WTC11 (cell line): ENCODE measurements at regions of chr6 and their contacts with region 1.

Region 1: DNA sequence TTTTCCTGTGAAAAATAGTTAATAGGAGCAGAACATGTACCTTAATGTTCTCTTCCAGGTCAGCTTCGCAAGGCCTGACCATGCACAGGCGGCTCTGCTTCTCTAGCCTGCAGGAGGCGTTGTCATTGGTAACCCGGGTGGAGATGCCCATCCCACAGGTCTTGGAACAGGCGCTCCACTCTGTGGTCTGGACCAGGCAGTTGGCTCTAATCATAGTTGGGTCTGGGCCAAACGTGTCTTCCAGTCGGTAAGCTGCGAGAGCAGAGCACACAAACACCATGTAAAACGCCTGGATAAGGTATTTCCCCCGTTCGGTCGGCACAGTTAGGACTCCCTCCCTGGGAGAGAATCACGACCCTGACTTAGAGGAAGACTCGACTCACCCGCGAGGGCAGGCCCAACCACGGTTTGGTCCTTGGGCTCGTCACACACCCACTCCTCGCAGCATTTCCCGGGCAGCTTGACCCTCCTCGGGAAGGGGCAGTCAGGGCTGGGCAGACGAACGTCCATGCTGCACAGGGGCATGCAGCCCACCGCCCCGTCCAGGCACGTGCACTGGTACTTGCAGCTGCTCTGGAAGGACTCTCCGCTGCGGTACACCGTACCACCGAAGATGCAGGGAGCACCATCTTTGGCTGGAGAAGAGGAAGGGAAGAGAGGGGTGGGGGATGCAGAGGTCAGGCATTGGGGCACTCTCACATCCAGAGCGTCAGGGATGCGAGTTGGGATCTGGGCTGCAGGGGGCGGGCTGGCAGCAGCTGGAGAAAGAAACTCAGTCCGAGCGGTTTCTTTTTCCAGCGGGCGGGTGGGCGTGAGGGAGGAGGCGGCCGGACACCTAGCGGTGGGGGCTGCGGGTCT is 1.0 kb downstream of the CCN2 start:
- DNase-seq: peak; percentile 85
- ATAC-seq: peak; percentile 43
- H3K4me3 Mint-ChIP-seq: peak overlapping the region; percentile 82
- H3K27ac Mint-ChIP-seq: peak overlapping the region; percentile 51; the same call in 1 of the 2 replicates
- H3K4me1 Mint-ChIP-seq: peaks cover 81% of the 10 kb centered on the region
- H3K27me3 Mint-ChIP-seq: no peaks in the 10 kb centered on the region
- CTCF ChIP-seq: peak; percentile 39; the same call in 1 of the 2 replicates

Region 2: GRCh38 chr6:131923356-131923755 is 26.8 kb before region 1 on chr6:
- CTCF ChIA-PET with region 1: interaction called, 20 read pairs
- POLR2A ChIA-PET with region 1: interaction called, 10 read pairs
- DNase-seq: peak; percentile 75
- ATAC-seq: peak; percentile 50
- H3K4me3 Mint-ChIP-seq: no peak overlapping the region
- H3K27ac Mint-ChIP-seq: no peak overlapping the region
- H3K4me1 Mint-ChIP-seq: no peaks in the 10 kb centered on the region
- H3K27me3 Mint-ChIP-seq: peaks cover 5% of the 10 kb centered on the region; the same call in 1 of the 2 replicates
- CTCF ChIP-seq: peak; percentile 84

Region 3: GRCh38 chr6:132025468-132025867 is 75.3 kb after region 1 on chr6:
- CTCF ChIA-PET with region 1: interaction called, 4 read pairs
- POLR2A ChIA-PET with region 1: interaction called, 12 read pairs
- DNase-seq: no peak
- ATAC-seq: peak; percentile 65
- H3K4me3 Mint-ChIP-seq: no peak overlapping the region
- H3K27ac Mint-ChIP-seq: peak overlapping the region; percentile 12; the same call in 1 of the 2 replicates
- H3K4me1 Mint-ChIP-seq: peaks cover 29% of the 10 kb centered on the region
- H3K27me3 Mint-ChIP-seq: no peaks in the 10 kb centered on the region
- CTCF ChIP-seq: no peak

Region 4: GRCh38 chr6:132259070-132259469 is 308.9 kb after region 1 on chr6:
- CTCF ChIA-PET with region 1: interaction called, 17 read pairs
- POLR2A ChIA-PET with region 1: interaction called, 3 read pairs
- DNase-seq: no peak
- ATAC-seq: peak; percentile 85
- H3K4me3 Mint-ChIP-seq: no peak overlapping the region
- H3K27ac Mint-ChIP-seq: no peak overlapping the region
- H3K4me1 Mint-ChIP-seq: peaks cover 18% of the 10 kb centered on the region
- H3K27me3 Mint-ChIP-seq: peaks cover 19% of the 10 kb centered on the region
- CTCF ChIP-seq: no peak